ENCODE measurements at regions of chr12 and their contacts with region 1.

Region 1: DNA sequence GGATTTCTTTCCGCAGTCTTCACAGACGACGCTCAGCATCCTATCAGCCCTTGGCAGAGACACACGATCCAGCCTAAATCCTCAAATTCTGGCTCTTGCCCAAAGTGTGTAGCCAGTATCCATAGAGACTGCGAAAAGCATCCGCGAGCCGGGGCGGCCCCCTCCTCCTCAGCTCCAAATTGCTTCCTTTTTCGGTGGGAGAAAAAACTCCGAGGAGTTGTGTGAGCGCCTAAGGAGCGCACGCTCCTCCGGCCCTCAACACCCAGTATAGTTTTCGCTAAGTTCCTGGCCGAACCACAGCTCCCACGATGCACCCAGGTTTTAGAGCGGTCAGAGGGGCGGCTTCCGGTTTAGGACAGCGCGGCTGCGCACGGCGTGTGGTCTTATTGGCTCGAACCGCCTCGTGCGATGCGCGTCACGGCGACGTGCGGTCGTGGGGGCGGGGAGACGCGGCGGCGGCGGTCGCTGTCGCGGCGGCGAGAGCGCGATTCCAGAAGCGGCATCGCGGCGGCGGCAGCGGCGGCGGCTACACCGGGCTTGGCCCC is at the start of gene ADIPOR2:
- DNase-seq: peak; percentile 93
- H3K4me3 ChIP-seq: peak within 1 kb of the TSS; percentile 91
- H3K27ac ChIP-seq: peak within 1 kb of the TSS; percentile 88
- H3K27me3 ChIP-seq: no peaks in the 10 kb centered on the region
- CTCF ChIP-seq: no peak

Region 2: DNA sequence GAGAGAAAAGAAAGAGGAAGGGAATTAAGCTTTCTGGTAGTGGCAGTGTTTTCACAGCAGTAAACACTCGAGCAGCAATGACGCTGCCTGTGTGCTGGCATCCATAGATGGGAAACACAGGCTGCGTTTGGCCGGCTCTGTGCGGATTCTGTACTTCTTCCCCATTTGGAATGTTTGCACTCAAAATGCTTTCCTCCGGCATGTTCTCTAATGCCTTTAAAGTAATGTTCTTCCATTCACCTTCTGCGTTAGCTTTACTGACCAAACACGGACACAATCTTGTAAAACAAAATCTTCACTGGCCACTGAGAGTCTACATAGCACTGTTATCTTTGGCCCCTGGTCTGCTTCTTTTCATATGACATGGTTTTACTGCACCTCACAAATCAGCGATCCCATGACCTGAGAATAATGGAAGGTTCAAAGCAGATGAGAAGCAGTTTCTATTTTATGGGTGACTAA is 282.2 kb after region 1 on chr12:
- in situ Hi-C with region 1: loop called (anchors 25 kb)
- DNase-seq: peak; percentile 41
- H3K4me3 ChIP-seq: no peak overlapping the region
- H3K27ac ChIP-seq: peak overlapping the region; percentile 77
- H3K27me3 ChIP-seq: no peaks in the 10 kb centered on the region
- CTCF ChIP-seq: no peak

Measured in brain microvascular endothelial cell (primary cell).